GM12878 (cell line): ENCODE measurements at regions of chr1 and their contacts with region 1.

Region 1: DNA sequence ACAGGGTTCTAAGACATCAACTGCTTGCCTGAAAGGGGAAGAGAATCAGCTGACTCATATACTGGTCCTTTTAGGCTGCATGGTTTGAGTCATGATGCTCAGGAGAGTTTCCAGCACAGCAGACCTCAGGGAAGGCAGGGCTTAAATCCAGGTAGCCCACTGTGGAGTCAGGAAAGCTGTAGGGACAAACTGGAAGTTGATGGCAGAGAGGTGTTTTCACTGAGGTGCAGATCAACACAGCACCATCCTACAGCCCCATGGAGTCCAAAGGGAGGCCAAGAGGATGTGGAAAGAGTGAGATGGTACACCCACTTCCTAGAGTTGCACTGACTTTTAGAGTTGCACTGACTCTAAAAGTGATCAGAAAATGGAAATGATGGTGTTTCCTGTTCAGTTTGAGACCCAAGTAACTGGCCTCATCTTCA is 252.4 kb upstream of the DUSP10 start:
- DNase-seq: peak; percentile 38
- ATAC-seq: peak; percentile 69
- H3K4me3 ChIP-seq: no peak overlapping the region
- H3K27ac ChIP-seq: no peak overlapping the region
- H3K4me1 ChIP-seq: peaks cover 17% of the 10 kb centered on the region
- H3K27me3 ChIP-seq: no peaks in the 10 kb centered on the region
- CTCF ChIP-seq: no peak
- EP300 ChIP-seq: no peak; a peak in 1 of 4 replicates
- POLR2A ChIP-seq: no peak
- RAD21 ChIP-seq: no peak

Region 2: DNA sequence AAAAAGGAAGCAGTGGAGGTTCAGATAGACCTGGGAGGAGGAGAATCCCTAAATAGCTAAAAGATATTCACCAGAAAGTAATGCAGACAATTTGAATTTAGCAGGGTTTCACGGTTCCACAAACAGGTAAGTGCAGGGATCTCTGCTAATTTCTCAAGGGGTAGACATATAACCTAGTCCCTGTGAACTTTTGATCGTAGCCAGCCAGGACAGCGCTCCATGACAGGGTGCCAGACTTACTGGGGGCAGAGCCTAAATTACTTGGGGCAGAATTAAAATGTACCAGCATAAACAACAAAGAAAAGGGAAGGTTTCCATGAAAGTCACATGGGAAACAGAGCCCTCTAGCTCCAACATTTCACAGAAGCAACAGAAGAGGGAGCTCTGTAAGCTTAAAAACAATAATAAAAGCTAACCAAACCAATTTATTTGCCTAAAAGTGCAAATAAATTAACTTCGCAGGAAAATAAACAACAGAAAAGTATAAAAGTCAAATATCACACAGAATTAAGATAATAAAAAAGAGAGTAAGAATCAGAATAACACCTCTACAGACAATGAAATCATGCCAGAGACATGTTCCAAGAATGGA is 450.7 kb before region 1 on chr1:
- CTCF ChIA-PET with region 1: interaction called, 14 read pairs
- POLR2A ChIA-PET with region 1: no interaction called
- RAD21 ChIA-PET with region 1: no interaction called
- SMC1A ChIA-PET with region 1: interaction called, 8 read pairs
- in situ Hi-C with region 1: no loop called
- intact Hi-C with region 1: no loop called
- DNase-seq: no peak
- ATAC-seq: peak; percentile 64
- H3K4me3 ChIP-seq: no peak overlapping the region
- H3K27ac ChIP-seq: no peak overlapping the region
- H3K4me1 ChIP-seq: no peaks in the 10 kb centered on the region
- H3K27me3 ChIP-seq: no peaks in the 10 kb centered on the region
- CTCF ChIP-seq: peak; percentile 39 to 57 (median 53); a peak in 5 of 6 replicates
- EP300 ChIP-seq: no peak
- POLR2A ChIP-seq: no peak
- RAD21 ChIP-seq: peak; percentile 66

Region 3: GRCh38 chr1:221939607-221940006 is 54.7 kb before region 1 on chr1:
- CTCF ChIA-PET with region 1: no interaction called
- POLR2A ChIA-PET with region 1: interaction called, 5 read pairs
- RAD21 ChIA-PET with region 1: interaction called, 5 read pairs
- SMC1A ChIA-PET with region 1: interaction called, 18 read pairs
- in situ Hi-C with region 1: no loop called
- intact Hi-C with region 1: no loop called
- DNase-seq: peak; percentile 84
- ATAC-seq: peak; percentile 90
- H3K4me3 ChIP-seq: no peak overlapping the region
- H3K27ac ChIP-seq: no peak overlapping the region; the same call in 1 of the 2 replicates
- H3K4me1 ChIP-seq: peaks cover 19% of the 10 kb centered on the region
- H3K27me3 ChIP-seq: no peaks in the 10 kb centered on the region
- CTCF ChIP-seq: no peak
- EP300 ChIP-seq: peak in 1 of 2 experiments; percentile 56; a peak in 1 of 4 replicates
- POLR2A ChIP-seq: no peak
- RAD21 ChIP-seq: no peak

Region 4: GRCh38 chr1:221961532-221962292 is 32.6 kb before region 1 on chr1:
- CTCF ChIA-PET with region 1: interaction called, 10 read pairs
- POLR2A ChIA-PET with region 1: interaction called, 6 read pairs
- RAD21 ChIA-PET with region 1: interaction called, 8 read pairs
- SMC1A ChIA-PET with region 1: interaction called, 12 read pairs
- in situ Hi-C with region 1: no loop called
- intact Hi-C with region 1: no loop called
- DNase-seq: peak; percentile 55
- ATAC-seq: peak; percentile 96
- H3K4me3 ChIP-seq: no peak overlapping the region
- H3K27ac ChIP-seq: no peak overlapping the region
- H3K4me1 ChIP-seq: no peaks in the 10 kb centered on the region; the same call in 1 of the 2 replicates
- H3K27me3 ChIP-seq: no peaks in the 10 kb centered on the region
- CTCF ChIP-seq: no peak
- EP300 ChIP-seq: peak; percentile 26 to 44; a peak in 2 of 4 replicates
- POLR2A ChIP-seq: no peak
- RAD21 ChIP-seq: no peak

Region 5: GRCh38 chr1:221979461-221980032 is 14.7 kb before region 1 on chr1:
- CTCF ChIA-PET with region 1: interaction called, 5 read pairs
- POLR2A ChIA-PET with region 1: no interaction called
- RAD21 ChIA-PET with region 1: interaction called, 4 read pairs
- SMC1A ChIA-PET with region 1: interaction called, 10 read pairs
- in situ Hi-C with region 1: no loop called
- intact Hi-C with region 1: no loop called
- DNase-seq: no peak
- ATAC-seq: peak; percentile 48
- H3K4me3 ChIP-seq: no peak overlapping the region
- H3K27ac ChIP-seq: no peak overlapping the region
- H3K4me1 ChIP-seq: no peaks in the 10 kb centered on the region
- H3K27me3 ChIP-seq: no peaks in the 10 kb centered on the region
- CTCF ChIP-seq: no peak; a peak in 1 of 6 replicates
- EP300 ChIP-seq: no peak
- POLR2A ChIP-seq: no peak
- RAD21 ChIP-seq: peak; percentile 49

Region 6: DNA sequence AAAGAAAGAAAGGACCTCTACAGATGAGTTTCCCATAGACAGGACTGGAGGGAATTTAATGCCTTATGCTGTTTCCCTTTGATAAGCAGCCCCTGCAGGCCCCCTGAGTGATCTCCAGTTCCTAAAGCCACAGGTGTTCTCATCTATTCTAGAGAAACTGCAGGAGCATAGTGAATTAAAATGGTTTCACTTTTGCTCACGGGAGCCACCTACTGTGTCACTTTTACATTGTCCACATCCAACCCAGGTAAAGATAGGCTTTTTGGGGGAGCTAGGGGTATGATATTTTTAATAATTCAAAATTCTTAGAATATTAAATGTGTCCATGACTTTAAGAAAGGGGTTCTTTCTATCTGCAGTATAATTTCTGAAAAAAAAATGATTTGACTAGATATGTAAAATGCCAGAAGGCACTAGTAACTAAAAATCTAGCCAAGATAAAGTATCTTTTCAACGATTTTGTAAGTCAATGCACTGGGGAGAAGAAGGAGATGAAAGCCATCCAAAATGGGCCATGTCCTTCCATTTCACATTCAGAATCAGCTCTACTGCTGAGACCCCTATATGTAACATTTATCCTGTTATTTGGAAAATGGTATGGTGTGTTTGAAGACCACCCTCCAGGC is 14.9 kb after region 1 on chr1:
- CTCF ChIA-PET with region 1: interaction called, 15 read pairs
- POLR2A ChIA-PET with region 1: interaction called, 8 read pairs
- RAD21 ChIA-PET with region 1: interaction called, 8 read pairs
- SMC1A ChIA-PET with region 1: interaction called, 16 read pairs
- in situ Hi-C with region 1: no loop called
- intact Hi-C with region 1: no loop called
- DNase-seq: peak; percentile 36
- ATAC-seq: peak; percentile 95
- H3K4me3 ChIP-seq: no peak overlapping the region
- H3K27ac ChIP-seq: no peak overlapping the region
- H3K4me1 ChIP-seq: no peaks in the 10 kb centered on the region
- H3K27me3 ChIP-seq: no peaks in the 10 kb centered on the region
- CTCF ChIP-seq: peak; percentile 45 to 59 (median 48); a peak in 5 of 6 replicates
- EP300 ChIP-seq: no peak
- POLR2A ChIP-seq: no peak
- RAD21 ChIP-seq: peak; percentile 74

Region 7: DNA sequence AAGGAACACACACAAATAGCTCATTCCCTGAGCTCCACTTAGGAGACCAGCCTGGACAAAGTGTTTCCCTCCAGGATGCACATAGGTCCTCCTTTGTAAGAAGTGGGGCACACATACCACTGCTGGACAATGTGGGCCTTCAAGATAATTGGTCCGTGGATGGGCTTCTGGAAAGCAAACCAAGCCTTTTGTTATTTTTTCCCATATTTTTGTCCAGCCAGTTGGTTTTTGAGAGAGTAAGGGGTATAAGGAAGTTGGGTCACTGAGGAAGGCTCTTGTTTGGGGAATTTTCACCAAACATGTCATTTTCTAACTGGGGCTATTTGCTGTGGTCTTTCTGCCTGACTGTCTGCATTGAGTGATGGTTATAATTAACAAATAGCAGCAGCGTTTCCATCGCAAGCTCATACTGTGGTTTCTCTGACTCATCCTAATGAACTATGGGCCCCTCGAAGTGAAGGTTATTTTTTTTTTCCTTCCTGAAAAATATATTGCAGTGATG is 53.9 kb after region 1 on chr1:
- CTCF ChIA-PET with region 1: interaction called, 4 read pairs
- POLR2A ChIA-PET with region 1: no interaction called
- RAD21 ChIA-PET with region 1: interaction called, 9 read pairs
- SMC1A ChIA-PET with region 1: interaction called, 15 read pairs
- in situ Hi-C with region 1: no loop called
- intact Hi-C with region 1: no loop called
- DNase-seq: peak; percentile 54
- ATAC-seq: peak; percentile 94
- H3K4me3 ChIP-seq: no peak overlapping the region
- H3K27ac ChIP-seq: peak overlapping the region; percentile 58
- H3K4me1 ChIP-seq: peaks cover 5% of the 10 kb centered on the region
- H3K27me3 ChIP-seq: no peaks in the 10 kb centered on the region
- CTCF ChIP-seq: no peak
- EP300 ChIP-seq: peak; percentile 63 to 88; a peak in 3 of 4 replicates
- POLR2A ChIP-seq: no peak
- RAD21 ChIP-seq: no peak

Region 8: GRCh38 chr1:222288040-222288439 is 293.8 kb after region 1 on chr1:
- CTCF ChIA-PET with region 1: no interaction called
- POLR2A ChIA-PET with region 1: no interaction called
- RAD21 ChIA-PET with region 1: no interaction called
- SMC1A ChIA-PET with region 1: no interaction called
- in situ Hi-C with region 1: no loop called
- intact Hi-C with region 1: no loop called
- DNase-seq: no peak
- ATAC-seq: no peak
- H3K4me3 ChIP-seq: no peak overlapping the region
- H3K27ac ChIP-seq: no peak overlapping the region
- H3K4me1 ChIP-seq: no peaks in the 10 kb centered on the region
- H3K27me3 ChIP-seq: no peaks in the 10 kb centered on the region; a peak in 1 of 4 replicates
- CTCF ChIP-seq: no peak
- EP300 ChIP-seq: no peak
- POLR2A ChIP-seq: no peak
- RAD21 ChIP-seq: no peak